ENCODE measurements at regions of chr18 and their contacts with region 1.

Region 1: DNA sequence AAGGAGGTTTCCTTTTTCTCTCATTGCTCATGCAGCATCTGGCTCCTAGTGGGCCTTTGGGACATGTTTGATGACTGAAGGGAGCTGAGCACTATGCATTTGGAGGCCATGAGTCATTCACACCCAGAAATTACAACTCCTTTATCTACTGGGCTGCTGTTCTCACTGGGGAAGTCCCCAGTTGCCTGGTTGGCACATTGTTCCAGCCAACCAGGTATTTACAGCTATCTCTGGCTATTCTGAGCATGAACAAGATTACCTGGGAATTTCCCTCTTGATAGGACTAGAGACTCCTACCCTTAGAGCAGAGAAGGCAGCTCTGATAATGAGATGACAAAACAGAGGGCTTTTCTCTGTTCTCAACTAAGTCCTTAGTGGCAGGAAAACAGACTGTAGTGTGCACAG is 206.5 kb downstream of the SETBP1 start:
- DNase-seq: peak; percentile 73
- H3K4me3 Mint-ChIP-seq: no peak overlapping the region
- H3K27ac Mint-ChIP-seq: peak overlapping the region; percentile 80
- H3K4me1 Mint-ChIP-seq: peaks cover 11% of the 10 kb centered on the region
- H3K27me3 Mint-ChIP-seq: no peaks in the 10 kb centered on the region
- CTCF ChIP-seq: no peak

Region 2: DNA sequence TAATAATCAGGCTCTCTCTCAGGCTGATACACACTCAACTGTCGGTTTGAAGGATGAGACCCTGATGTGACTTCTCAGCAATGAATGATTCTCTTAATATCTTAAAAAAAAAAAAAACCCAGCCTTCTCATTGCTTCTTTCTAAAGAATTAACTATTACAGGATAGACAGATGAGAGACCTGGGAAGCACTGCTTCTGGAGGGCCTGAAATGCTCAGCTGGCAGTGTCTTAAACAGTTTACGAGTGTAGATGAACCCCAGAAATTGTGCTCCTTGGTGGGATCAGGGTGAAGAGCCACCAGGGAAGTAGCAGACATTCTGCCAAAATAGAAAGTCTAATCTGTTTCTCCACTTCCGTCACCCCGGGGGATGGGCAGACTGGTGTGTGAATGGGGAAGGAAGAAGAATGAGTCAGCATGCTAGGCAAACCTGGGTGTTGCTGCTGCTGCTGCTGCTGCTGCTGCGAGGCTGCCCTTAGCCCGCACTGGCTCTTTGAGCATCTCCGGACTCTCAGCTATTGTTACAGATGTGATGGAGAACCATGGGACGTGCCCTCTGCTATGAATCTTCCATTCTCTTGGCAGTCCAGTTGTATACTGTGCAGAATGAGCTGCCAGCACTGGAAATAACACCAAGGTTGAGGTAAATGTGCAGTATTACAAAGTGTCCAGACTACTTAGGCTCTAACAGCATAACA is 48.1 kb before region 1 on chr18:
- CTCF ChIA-PET with region 1: interaction called, 3 read pairs
- POLR2A ChIA-PET with region 1: no interaction called
- intact Hi-C with region 1: loop called (anchors 10 kb)
- DNase-seq: peak; percentile 86
- H3K4me3 Mint-ChIP-seq: peak overlapping the region; percentile 17
- H3K27ac Mint-ChIP-seq: peak overlapping the region; percentile 75
- H3K4me1 Mint-ChIP-seq: peaks cover 17% of the 10 kb centered on the region
- H3K27me3 Mint-ChIP-seq: no peaks in the 10 kb centered on the region
- CTCF ChIP-seq: no peak